RWPE1 (cell line): ENCODE measurements at regions of chr2 and their contacts with region 1.

Region 1: GRCh38 chr2:31333527-31334183 is 80.9 kb downstream of the XDH start:
- DNase-seq: peak; percentile 69
- H3K27ac ChIP-seq: no peak overlapping the region
- CTCF ChIP-seq: peak; percentile 82

Region 2: DNA sequence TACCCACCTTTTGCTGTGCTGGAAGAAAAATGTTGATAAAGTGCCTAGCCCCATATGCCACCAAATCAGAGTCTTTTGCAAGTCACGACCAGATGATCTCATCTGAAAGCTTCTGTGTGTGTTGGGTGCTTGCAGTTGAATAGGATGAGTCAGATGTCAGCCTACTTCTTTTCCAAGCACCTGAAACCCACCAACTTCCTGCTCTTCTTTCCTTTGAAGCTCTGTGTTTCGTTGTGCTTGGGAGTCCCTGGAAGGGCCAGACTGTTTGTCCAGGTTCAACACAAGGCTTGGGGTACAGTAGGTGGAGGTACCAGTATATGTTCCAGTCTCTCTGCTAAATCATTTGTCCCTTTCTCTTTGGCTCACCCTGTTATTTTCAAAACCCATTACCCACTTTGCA is 923.4 kb before region 1 on chr2:
- CTCF ChIA-PET with region 1: no interaction called
- POLR2A ChIA-PET with region 1: no interaction called
- DNase-seq: peak; percentile 16
- H3K27ac ChIP-seq: no peak overlapping the region
- CTCF ChIP-seq: no peak

Region 3: DNA sequence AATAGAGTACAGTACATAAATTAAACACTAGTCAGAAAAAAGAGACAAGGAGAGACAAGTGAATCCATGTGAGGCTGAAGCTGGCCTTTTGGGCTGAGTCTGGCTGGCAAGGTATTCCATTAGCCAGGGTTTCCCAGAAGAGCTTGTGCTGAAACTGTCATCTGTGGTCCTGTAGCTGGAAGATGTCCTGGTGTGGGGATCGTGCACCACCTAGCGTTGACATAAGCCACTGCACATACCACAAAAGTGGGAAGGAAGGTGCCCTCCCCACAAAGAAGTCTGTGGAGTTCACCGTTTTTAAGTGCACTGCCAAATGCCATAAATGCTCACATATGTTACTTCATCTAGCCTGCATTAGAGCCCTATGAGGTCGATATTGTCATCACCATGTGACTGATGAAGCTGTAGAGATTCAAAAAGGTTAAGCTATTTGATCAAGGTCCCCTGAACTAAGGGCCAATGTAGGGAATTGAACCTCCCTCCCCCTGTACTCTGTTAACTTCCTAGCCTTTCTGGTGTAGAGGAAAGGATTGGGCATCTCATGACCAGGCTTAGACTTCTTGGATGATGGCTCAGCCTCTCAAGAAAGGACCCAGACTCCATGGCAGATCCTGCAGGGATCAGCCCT is 163.5 kb before region 1 on chr2:
- CTCF ChIA-PET with region 1: interaction called, 12 read pairs
- POLR2A ChIA-PET with region 1: no interaction called
- DNase-seq: peak; percentile 81
- H3K27ac ChIP-seq: no peak overlapping the region
- CTCF ChIP-seq: peak; percentile 87

Region 4: DNA sequence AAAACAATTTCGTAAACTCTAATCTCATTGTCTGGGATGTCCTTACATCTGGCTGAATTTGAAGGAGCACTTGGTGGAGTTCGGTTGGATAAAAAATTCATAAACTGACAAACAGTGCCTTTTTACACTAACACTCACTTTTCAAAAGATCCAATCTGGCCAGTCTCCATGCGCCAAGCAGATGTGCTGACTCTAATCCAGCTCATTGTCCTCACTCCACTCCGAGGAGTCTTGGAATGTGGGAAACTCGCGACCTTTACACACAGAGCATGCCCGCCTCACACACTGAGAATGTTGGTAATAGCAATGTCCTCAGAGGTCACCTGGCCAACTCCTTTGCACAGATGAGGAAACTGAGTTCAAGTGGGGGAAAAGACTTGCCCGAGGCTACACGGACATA is 14.1 kb after region 1 on chr2:
- CTCF ChIA-PET with region 1: no interaction called
- POLR2A ChIA-PET with region 1: no interaction called
- DNase-seq: no peak
- H3K27ac ChIP-seq: no peak overlapping the region
- CTCF ChIP-seq: no peak

Region 5: GRCh38 chr2:31539505-31539904 is 205.8 kb after region 1 on chr2:
- CTCF ChIA-PET with region 1: no interaction called
- POLR2A ChIA-PET with region 1: no interaction called
- DNase-seq: no peak
- H3K27ac ChIP-seq: no peak overlapping the region
- CTCF ChIP-seq: no peak